T-cell (primary cell): ENCODE measurements at regions of chr20 and their contacts with region 1.

Region 1: GRCh38 chr20:631101-631500 is 21.0 kb upstream of the TCF15 start:
- DNase-seq: no peak
- ATAC-seq: no peak
- H3K4me3 ChIP-seq: no peak overlapping the region
- H3K4me3 Mint-ChIP-seq: no peak overlapping the region
- H3K27ac ChIP-seq: no peak overlapping the region
- H3K27ac Mint-ChIP-seq: no peak overlapping the region
- H3K4me1 ChIP-seq: no peaks in the 10 kb centered on the region
- H3K4me1 Mint-ChIP-seq: no peaks in the 10 kb centered on the region
- H3K27me3 ChIP-seq: peaks cover 0 to 25% of the 10 kb centered on the region in 2 experiments
- H3K27me3 Mint-ChIP-seq: peaks cover 18 to 20% of the 10 kb centered on the region in 2 donors

Region 2: GRCh38 chr20:354298-355064 is 276.6 kb before region 1 on chr20:
- CTCF ChIA-PET with region 1: interaction called in 1 of 2 experiments, 11 read pairs
- POLR2A ChIA-PET with region 1: no interaction called
- DNase-seq: peak; percentile 54 to 91 (median 73)
- ATAC-seq: peak; percentile 97 to 100 (median 98)
- H3K4me3 ChIP-seq: no peak overlapping the region
- H3K4me3 Mint-ChIP-seq: no peak overlapping the region
- H3K27ac ChIP-seq: no peak overlapping the region
- H3K27ac Mint-ChIP-seq: no peak overlapping the region
- H3K4me1 ChIP-seq: peaks cover 0 to 7% of the 10 kb centered on the region in 2 experiments
- H3K4me1 Mint-ChIP-seq: peaks cover 3 to 5% (median 5%) of the 10 kb centered on the region in 3 donors
- H3K27me3 ChIP-seq: peaks cover 0 to 4% of the 10 kb centered on the region in 2 experiments
- H3K27me3 Mint-ChIP-seq: no peaks in the 10 kb centered on the region

Region 3: GRCh38 chr20:610130-611046 is 20.7 kb before region 1 on chr20 and contains the start of gene TCF15:
- CTCF ChIA-PET with region 1: no interaction called
- POLR2A ChIA-PET with region 1: no interaction called
- DNase-seq: peak in 1 of 35 experiments; percentile 8
- ATAC-seq: peak in 3 of 4 experiments; percentile 36 to 49 (median 40)
- H3K4me3 ChIP-seq: peak within 1 kb of the TSS in 1 of 2 donors; percentile 6
- H3K4me3 Mint-ChIP-seq: peak within 1 kb of the TSS in 1 of 3 donors; percentile 59
- H3K27ac ChIP-seq: no peak within 1 kb of the TSS
- H3K27ac Mint-ChIP-seq: no peak within 1 kb of the TSS
- H3K4me1 ChIP-seq: peaks cover 0 to 12% of the 10 kb centered on the region in 2 experiments
- H3K4me1 Mint-ChIP-seq: peaks cover 12 to 14% (median 13%) of the 10 kb centered on the region in 3 donors
- H3K27me3 ChIP-seq: peaks cover 0 to 73% of the 10 kb centered on the region in 2 experiments
- H3K27me3 Mint-ChIP-seq: peaks cover 55 to 74% of the 10 kb centered on the region in 2 donors
- total RNA-seq, gene TCF15: not detected